Dorsolateral prefrontal cortex (tissue), 120 donors: ENCODE measurements at regions of chr11 and their contacts with region 1.

Region 1: GRCh38 chr11:117134431-117134830 is 9.7 kb upstream of the PAFAH1B2 start:
- DNase-seq: no peak
- H3K4me3 ChIP-seq: no peak overlapping the region
- H3K27ac ChIP-seq: no peak overlapping the region
- H3K27me3 ChIP-seq: no peaks in the 10 kb centered on the region
- CTCF ChIP-seq: no peak

Region 2: GRCh38 chr11:117205211-117205818 is 70.9 kb after region 1 on chr11:
- intact Hi-C with region 1: loop called in 1 of 2 experiments (anchors 5 kb)
- DNase-seq: peak in 3 of 10 donors; percentile 40 to 54 (median 46)
- H3K4me3 ChIP-seq: peak overlapping the region in 1 of 59 donors; percentile 15
- H3K27ac ChIP-seq: peak overlapping the region in 42 of 59 donors; percentile 0 to 78 (median 45)
- H3K27me3 ChIP-seq: no peaks in the 10 kb centered on the region
- CTCF ChIP-seq: no peak